Activated CD4-positive, alpha-beta T cell treated with anti-CD3 and anti-CD28 coated beads for 36 hours (primary cell): ENCODE measurements at regions of chr20 and their contacts with region 1.

Region 1: GRCh38 chr20:32652739-32653526 is 20.8 kb downstream of the C20orf203 start:
- DNase-seq: peak; percentile 93
- ATAC-seq: peak; percentile 98
- H3K4me3 Mint-ChIP-seq: no peak overlapping the region
- H3K27ac Mint-ChIP-seq: no peak overlapping the region
- H3K4me1 Mint-ChIP-seq: peaks cover 12% of the 10 kb centered on the region
- H3K27me3 Mint-ChIP-seq: no peaks in the 10 kb centered on the region

Region 2: GRCh38 chr20:31861346-31862156 is 791.4 kb before region 1 on chr20:
- CTCF ChIA-PET with region 1: no interaction called
- POLR2A ChIA-PET with region 1: no interaction called
- intact Hi-C with region 1: loop called in 1 of 2 experiments (anchors 10 kb)
- DNase-seq: peak; percentile 84
- ATAC-seq: peak; percentile 97
- H3K4me3 Mint-ChIP-seq: peak overlapping the region; percentile 24
- H3K27ac Mint-ChIP-seq: no peak overlapping the region
- H3K4me1 Mint-ChIP-seq: peaks cover 8% of the 10 kb centered on the region
- H3K27me3 Mint-ChIP-seq: peaks cover 26% of the 10 kb centered on the region

Region 3: DNA sequence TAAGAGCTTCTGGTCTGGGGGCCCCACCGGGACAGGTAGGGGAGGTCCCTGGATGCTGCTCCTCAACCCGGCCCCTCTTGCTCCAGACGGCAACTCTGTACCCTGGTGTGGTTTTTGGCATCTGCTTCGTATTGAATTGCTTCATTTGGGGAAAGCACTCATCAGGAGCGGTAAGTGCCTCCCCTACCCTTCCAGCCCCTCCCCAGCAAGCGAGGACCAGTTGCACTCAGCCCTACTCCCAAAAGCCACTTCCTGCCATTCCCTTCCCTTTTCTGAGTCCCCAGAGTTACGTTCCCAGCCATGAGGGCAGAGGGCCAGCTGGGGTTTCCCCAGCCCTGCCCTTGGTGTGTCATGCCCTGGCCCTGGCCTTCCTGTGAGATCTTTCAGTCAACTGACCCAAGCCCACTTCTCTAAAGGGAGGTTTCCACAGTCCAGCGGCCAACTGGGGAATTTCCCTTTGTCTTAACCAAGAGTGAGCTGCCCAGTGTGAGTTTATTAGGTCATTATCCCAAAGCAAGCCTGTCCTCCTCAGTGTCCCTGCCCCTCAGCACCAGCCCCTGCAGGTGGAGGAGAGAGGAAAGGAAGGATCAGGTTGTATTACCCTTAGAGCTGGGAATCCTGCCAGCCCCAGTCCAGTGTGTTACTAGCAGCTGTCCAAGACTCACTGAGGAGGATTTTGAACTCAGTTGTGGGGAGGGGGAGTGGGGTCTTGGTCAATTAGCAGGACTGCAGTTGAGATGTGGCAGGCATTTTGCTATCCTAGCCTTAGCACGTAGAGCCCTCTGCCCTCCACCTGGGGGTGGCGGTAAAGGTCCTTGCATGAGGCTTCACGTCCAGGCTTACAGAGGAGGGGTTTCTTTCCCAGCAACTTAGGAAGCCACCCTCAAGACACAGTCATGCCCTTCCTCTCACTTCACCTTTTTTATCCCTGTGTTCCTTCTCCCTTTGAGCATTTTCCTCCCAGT is 497.6 kb before region 1 on chr20:
- CTCF ChIA-PET with region 1: no interaction called
- POLR2A ChIA-PET with region 1: no interaction called
- intact Hi-C with region 1: loop called in 1 of 2 experiments (anchors 10 kb)
- DNase-seq: peak; percentile 61
- ATAC-seq: peak; percentile 49
- H3K4me3 Mint-ChIP-seq: no peak overlapping the region
- H3K27ac Mint-ChIP-seq: peak overlapping the region; percentile 55
- H3K4me1 Mint-ChIP-seq: peaks cover 6% of the 10 kb centered on the region
- H3K27me3 Mint-ChIP-seq: no peaks in the 10 kb centered on the region

Region 4: DNA sequence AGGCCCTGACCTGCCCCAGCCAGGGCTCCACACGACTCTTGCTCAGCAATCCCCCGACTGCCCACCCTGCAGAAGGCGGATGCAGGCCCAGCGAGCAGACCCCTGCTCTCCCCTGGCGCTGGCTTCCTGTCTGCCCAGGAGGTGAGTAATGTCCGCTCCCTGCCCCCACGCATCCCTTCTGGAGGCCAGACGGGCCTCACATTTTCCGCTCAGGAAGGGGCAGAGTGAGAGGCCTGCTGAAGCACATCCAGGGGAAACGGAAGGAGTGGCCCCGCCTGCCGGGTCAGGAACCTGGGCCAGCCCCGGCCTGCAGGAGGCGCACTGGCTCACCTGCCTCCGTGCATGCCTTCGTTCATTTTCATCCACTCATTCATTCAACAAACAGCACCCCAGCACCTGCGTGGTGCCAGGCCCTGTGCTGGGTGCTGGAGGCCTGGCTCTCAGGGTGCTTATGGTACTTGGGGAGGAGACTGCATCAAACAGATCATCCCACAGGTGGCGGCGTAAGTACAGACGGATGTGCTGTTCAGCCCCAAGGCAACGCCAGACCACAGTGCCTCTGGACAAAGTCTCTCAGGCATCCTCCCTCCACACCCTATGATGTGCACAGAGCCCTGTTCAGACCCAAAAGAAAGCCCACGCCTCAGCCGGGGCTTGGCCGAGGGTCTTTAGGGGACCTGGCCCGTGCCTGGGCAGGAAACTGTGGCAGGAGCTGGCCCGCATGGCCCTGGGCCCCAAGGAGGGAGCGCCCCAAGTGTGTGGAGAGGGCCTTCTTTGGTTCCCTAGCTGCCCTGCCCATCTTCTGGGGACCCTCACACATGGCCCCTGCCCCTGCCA is 182.7 kb before region 1 on chr20:
- CTCF ChIA-PET with region 1: interaction called, 4 read pairs
- POLR2A ChIA-PET with region 1: no interaction called
- intact Hi-C with region 1: loop called in 1 of 2 experiments (anchors 1 kb)
- DNase-seq: peak; percentile 58
- ATAC-seq: peak; percentile 64
- H3K4me3 Mint-ChIP-seq: no peak overlapping the region
- H3K27ac Mint-ChIP-seq: peak overlapping the region; percentile 53
- H3K4me1 Mint-ChIP-seq: no peaks in the 10 kb centered on the region
- H3K27me3 Mint-ChIP-seq: no peaks in the 10 kb centered on the region

Region 5: DNA sequence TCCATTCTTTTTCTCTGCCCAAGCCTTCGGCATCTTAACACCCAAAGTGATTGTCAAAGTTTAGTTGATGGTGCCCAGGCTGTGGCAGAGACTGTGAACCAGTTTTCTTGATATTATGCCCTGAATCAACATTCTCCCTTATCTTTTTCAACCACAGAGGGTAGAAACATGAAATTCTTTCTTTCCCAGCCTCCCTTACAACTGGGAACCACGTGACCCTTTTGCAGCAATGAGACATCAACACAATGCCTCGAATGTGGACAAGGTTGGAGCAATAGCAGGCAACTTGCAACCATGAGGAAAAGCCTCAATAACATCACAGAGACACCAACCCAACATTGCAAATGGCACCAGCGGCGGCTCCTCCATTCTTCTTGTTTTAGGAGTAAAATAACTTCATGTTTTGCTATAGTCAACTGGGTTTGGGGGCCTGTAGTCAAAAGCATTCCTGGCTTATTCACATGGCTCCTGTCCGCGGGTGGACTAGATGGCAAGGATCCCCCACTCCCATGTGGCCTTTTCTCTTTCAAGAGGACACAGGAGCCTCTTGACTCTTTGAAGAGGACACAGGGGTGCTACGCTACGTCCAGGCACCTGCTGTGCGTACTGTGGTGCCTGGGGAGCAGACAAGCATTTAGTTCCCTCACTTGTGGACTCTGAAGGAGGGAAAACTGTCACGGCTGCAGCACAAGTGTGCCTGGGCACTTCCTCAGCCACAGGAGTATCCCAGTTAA is 158.3 kb before region 1 on chr20:
- CTCF ChIA-PET with region 1: no interaction called
- POLR2A ChIA-PET with region 1: no interaction called
- intact Hi-C with region 1: no loop called
- DNase-seq: no peak
- ATAC-seq: no peak
- H3K4me3 Mint-ChIP-seq: no peak overlapping the region
- H3K27ac Mint-ChIP-seq: peak overlapping the region; percentile 38
- H3K4me1 Mint-ChIP-seq: peaks cover 21% of the 10 kb centered on the region
- H3K27me3 Mint-ChIP-seq: no peaks in the 10 kb centered on the region

Region 6: DNA sequence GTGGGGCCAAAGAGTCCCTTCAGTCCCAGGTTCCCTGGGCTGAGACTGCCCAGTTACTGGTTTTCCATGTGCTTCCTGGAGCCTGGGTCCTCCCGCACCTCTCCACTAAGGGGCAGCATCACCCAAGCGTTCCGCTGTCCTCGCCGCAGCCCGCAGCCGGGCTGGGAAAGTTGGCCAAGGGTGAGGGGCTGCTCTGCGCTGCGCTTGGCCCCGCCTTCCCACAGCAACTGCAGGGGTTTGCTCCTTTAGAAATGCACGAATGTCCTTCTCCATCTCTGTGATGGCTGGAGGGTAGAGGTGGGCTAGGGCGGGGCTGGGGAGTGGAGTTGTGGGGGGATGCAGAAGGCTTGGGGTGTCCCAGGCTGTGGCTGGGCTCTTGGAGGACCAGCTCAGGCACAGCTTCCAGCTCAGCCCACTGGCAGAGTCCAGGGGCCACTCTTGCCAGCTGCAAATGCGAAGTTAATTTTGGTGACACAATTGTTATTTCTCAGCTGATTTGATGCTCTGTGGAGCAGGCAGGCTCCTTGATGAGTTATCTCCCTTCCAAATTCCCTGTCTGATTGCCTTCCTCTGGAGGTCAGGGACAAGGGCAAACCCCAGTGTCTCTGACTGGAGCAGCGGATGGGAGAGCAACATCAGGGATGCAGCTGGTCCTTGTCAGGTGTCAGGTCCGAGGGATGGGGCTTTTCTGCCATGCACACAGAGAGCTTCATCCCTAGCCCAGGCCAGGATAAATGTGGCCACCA is 131.0 kb before region 1 on chr20:
- CTCF ChIA-PET with region 1: interaction called, 214 read pairs
- POLR2A ChIA-PET with region 1: interaction called, 3 read pairs
- intact Hi-C with region 1: loop called (anchors 1 kb)
- DNase-seq: peak; percentile 83
- ATAC-seq: peak; percentile 78
- H3K4me3 Mint-ChIP-seq: no peak overlapping the region
- H3K27ac Mint-ChIP-seq: peak overlapping the region; percentile 43
- H3K4me1 Mint-ChIP-seq: peaks cover 59% of the 10 kb centered on the region
- H3K27me3 Mint-ChIP-seq: no peaks in the 10 kb centered on the region

Region 7: DNA sequence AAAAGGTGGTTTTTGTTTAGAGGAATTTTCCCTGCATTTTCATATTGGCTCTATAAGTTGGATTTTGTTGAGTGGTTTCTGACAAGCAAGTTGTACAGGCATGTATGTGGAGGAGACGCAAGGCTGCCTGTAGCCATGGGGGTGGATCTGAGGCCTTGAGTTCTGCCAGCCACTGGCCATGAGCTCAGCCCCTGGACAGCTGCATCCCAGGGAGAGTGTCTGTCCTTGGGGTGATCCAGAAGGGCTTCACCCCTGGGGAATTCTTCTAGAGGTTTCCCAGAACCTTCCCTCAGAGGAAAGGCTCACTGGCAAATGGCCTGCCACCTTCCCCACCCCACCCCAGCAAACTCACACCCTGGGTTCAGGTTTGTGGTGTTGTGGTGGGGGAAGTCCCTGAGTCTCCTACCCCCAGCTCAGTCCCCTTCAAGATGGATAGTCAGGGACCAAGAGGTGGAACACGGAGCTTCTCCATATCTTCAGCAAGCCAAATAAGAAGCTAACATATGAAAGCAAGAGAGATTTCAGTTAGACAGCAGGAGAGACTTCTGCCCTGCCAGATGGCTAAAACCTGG is 56.2 kb before region 1 on chr20:
- CTCF ChIA-PET with region 1: no interaction called
- POLR2A ChIA-PET with region 1: no interaction called
- intact Hi-C with region 1: no loop called
- DNase-seq: no peak
- ATAC-seq: no peak
- H3K4me3 Mint-ChIP-seq: no peak overlapping the region
- H3K27ac Mint-ChIP-seq: no peak overlapping the region
- H3K4me1 Mint-ChIP-seq: peaks cover 4% of the 10 kb centered on the region
- H3K27me3 Mint-ChIP-seq: no peaks in the 10 kb centered on the region